Activated B cell treated with CpG ODN at 0.5 μM for 24 hours (primary cell): ENCODE measurements at regions of chr1 and their contacts with region 1.

Region 1: DNA sequence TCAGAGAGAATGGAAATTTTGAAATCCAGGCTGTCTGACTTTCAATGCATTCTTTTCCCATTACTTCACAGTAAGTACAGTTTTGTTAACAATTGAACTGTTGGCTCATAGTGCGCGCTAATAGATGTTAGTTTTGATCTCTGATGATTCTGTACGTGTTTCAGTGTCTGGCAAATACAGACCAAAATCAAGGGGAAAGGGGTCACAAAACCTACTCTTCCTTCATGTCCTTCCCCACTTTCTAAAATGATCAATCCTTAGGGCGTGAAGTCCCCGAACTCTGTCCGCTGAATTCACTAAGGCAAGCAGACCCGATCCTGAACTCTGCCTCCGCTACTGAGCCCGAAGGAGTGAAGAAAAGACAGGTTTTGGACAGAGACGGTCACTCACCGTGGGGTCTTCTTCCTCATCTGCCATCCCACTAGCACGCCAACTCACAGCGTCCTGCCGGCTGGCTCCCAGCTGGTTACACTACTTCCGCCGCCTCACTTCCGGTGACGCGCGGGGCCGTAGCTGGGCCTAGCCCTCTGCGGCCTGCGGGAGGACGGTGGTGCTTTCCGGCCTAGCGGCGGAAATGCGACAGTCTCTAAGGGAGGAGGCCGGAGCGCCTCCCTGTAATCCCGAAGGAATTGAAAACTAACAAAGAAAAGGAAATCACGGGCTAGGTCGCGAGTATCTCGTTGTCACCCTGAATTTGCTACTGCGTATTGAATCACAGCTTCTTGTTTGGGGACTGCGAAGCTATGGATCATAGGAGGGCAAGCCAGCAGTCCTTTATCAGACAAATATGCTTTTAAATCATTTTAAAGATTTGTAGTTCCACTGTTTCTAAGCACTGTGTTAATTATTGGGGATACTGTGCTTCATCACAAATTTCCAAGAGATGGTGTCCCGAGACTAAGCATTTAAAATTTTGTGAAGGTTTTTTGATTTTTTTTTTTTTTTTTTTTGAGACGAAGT is at the start of gene TAF13:
- DNase-seq: peak; percentile 92
- ATAC-seq: peak; percentile 99
- H3K4me3 Mint-ChIP-seq: peak within 1 kb of the TSS; percentile 97
- H3K27ac Mint-ChIP-seq: peak within 1 kb of the TSS; percentile 96
- H3K4me1 Mint-ChIP-seq: peaks cover 25% of the 10 kb centered on the region
- H3K27me3 Mint-ChIP-seq: no peaks in the 10 kb centered on the region
- CTCF ChIP-seq: no peak
- total RNA-seq, gene TAF13: 18.5 and 21.2 TPM in 2 replicates

Region 2: GRCh38 chr1:108847494-108847893 is 228.3 kb before region 1 on chr1:
- CTCF ChIA-PET with region 1: no interaction called
- POLR2A ChIA-PET with region 1: no interaction called
- intact Hi-C with region 1: no loop called
- DNase-seq: no peak
- ATAC-seq: no peak
- H3K4me3 Mint-ChIP-seq: no peak overlapping the region
- H3K27ac Mint-ChIP-seq: no peak overlapping the region
- H3K4me1 Mint-ChIP-seq: peaks cover 3% of the 10 kb centered on the region
- H3K27me3 Mint-ChIP-seq: peaks cover 11% of the 10 kb centered on the region
- CTCF ChIP-seq: no peak

Region 3: GRCh38 chr1:108963052-108963686 is 112.6 kb before region 1 on chr1 and contains the start of gene CLCC1:
- CTCF ChIA-PET with region 1: no interaction called
- POLR2A ChIA-PET with region 1: interaction called, 9 read pairs
- intact Hi-C with region 1: loop called (anchors 1 kb)
- DNase-seq: peak; percentile 84
- ATAC-seq: peak; percentile 94
- H3K4me3 Mint-ChIP-seq: peak within 1 kb of the TSS; percentile 88
- H3K27ac Mint-ChIP-seq: peak within 1 kb of the TSS; percentile 91
- H3K4me1 Mint-ChIP-seq: peaks cover 35% of the 10 kb centered on the region
- H3K27me3 Mint-ChIP-seq: no peaks in the 10 kb centered on the region
- CTCF ChIP-seq: no peak
- total RNA-seq, gene CLCC1: 19.5 and 28.3 TPM in 2 replicates

Region 4: DNA sequence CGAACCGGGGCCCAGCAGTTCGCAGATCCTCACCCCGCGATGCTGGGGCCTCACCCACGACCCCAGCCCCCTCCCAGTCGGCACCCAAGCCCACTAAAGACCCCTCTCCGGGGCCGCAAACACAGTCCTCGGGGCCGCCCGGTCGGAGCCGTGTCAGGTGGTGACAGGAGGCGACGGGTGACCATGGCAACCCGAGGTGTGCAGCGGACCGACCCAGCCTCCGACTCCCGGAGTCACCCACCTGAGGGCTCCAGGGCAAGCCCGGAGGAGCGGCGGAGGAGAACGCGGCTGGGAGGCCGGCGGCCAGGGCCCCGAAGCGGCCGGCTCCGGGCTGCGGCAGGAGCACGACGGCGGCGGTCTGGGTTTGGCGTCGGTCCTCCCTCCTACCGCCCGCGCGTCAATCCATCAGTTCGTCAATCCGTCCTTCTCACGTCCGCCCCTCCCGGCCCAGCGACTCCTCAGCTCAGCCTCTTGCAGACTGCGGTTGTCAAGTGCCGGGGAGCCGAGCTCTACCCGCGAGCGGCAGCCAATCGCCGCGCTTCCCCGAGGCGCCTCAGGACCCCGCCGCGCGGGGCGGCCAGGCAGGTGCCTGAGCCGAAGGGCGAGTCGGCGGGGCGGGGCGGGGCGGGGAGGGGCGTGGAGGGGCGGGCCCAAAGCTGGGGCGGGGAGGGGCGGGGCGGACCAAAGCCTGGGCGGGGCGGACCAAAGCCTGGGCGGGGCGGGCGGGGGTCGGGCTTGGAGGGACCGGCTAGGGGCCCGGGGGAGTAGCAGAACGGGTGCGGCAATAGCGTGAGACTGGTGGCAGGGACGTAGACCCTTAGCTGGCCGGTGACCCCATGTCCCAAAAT is 34.0 kb before region 1 on chr1 and contains the start of gene WDR47:
- CTCF ChIA-PET with region 1: no interaction called
- POLR2A ChIA-PET with region 1: interaction called, 22 read pairs
- intact Hi-C with region 1: loop called (anchors 1 kb)
- DNase-seq: peak; percentile 89
- ATAC-seq: peak; percentile 96
- H3K4me3 Mint-ChIP-seq: peak within 1 kb of the TSS; percentile 88
- H3K27ac Mint-ChIP-seq: peak within 1 kb of the TSS; percentile 60
- H3K4me1 Mint-ChIP-seq: peaks cover 15% of the 10 kb centered on the region
- H3K27me3 Mint-ChIP-seq: no peaks in the 10 kb centered on the region
- CTCF ChIP-seq: no peak
- total RNA-seq, gene WDR47: 10.3 and 10.9 TPM in 2 replicates

Region 5: DNA sequence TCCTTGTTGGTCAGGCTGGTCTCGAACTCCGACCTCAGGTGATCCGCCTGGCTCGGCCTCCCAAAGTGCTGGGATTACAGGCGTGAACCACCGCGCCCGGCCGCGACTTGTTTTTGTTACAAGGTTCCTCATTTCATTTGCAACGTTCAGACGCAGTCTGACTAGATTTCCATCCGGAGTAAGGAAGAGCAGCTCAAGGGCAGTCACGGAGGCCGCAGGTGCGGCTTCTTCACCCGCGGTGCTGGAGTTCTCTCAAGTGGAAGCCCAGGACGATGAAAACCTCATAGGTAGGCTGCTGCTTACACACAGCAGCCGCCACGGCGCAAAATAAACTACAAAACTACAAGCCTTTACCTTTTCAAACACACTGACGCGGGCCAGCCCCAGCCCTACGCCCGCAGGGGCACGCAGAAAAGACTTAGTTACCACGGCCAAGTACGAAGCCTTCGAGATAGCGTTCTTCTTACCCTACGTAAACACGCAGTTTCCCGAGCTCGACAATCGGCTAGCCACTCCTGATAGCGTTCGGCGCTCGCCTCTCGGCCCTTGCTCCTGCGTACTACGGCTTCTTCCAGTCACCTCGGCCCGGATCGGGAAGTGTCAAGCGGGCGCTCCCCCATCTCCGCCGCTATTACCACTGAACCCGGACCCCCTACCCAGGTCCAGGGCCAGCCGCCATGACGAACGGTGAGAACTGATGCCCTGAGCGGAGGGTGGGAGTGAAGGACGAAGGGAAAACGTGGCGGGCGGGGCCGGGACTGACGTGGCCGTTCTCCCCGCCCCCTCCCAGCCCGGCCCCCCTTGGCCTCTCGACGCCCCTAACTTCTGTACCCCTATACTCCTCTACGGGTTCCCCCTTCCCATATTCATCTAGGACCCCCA is 14.6 kb after region 1 on chr1 and contains the start of gene TMEM167B:
- CTCF ChIA-PET with region 1: interaction called, 3 read pairs
- POLR2A ChIA-PET with region 1: interaction called, 60 read pairs
- intact Hi-C with region 1: loop called (anchors 1 kb)
- DNase-seq: peak; percentile 79
- ATAC-seq: peak; percentile 87
- H3K4me3 Mint-ChIP-seq: peak within 1 kb of the TSS; percentile 98
- H3K27ac Mint-ChIP-seq: peak within 1 kb of the TSS; percentile 97
- H3K4me1 Mint-ChIP-seq: peaks cover 35% of the 10 kb centered on the region
- H3K27me3 Mint-ChIP-seq: no peaks in the 10 kb centered on the region
- CTCF ChIP-seq: no peak
- total RNA-seq, gene TMEM167B: 45.0 and 48.2 TPM in 2 replicates

Region 6: GRCh38 chr1:109112652-109113285 is 37.0 kb after region 1 on chr1:
- CTCF ChIA-PET with region 1: interaction called, 5 read pairs
- POLR2A ChIA-PET with region 1: interaction called, 9 read pairs
- intact Hi-C with region 1: loop called (anchors 1 kb)
- DNase-seq: peak; percentile 83
- ATAC-seq: peak; percentile 75
- H3K4me3 Mint-ChIP-seq: peak overlapping the region; percentile 77
- H3K27ac Mint-ChIP-seq: peak overlapping the region; percentile 56
- H3K4me1 Mint-ChIP-seq: peaks cover 25% of the 10 kb centered on the region
- H3K27me3 Mint-ChIP-seq: peaks cover 27% of the 10 kb centered on the region
- CTCF ChIP-seq: peak; percentile 88